T-cell (primary cell): ENCODE measurements at regions of chr1 and their contacts with region 1.

Region 1: GRCh38 chr1:39554277-39554676 is 22.3 kb downstream of the PABPC4 start:
- DNase-seq: no peak
- ATAC-seq: no peak
- H3K4me3 ChIP-seq: no peak overlapping the region
- H3K4me3 Mint-ChIP-seq: no peak overlapping the region
- H3K27ac ChIP-seq: no peak overlapping the region
- H3K27ac Mint-ChIP-seq: no peak overlapping the region
- H3K4me1 ChIP-seq: peaks cover 0 to 4% of the 10 kb centered on the region in 2 experiments
- H3K4me1 Mint-ChIP-seq: peaks cover 1 to 11% (median 8%) of the 10 kb centered on the region in 3 donors
- H3K27me3 ChIP-seq: no peaks in the 10 kb centered on the region
- H3K27me3 Mint-ChIP-seq: no peaks in the 10 kb centered on the region

Region 2: GRCh38 chr1:39394598-39394997 is 159.7 kb before region 1 on chr1:
- CTCF ChIA-PET with region 1: no interaction called
- POLR2A ChIA-PET with region 1: no interaction called
- DNase-seq: peak in 5 of 35 experiments; percentile 3 to 53 (median 15)
- ATAC-seq: peak; percentile 84 to 95 (median 90)
- H3K4me3 ChIP-seq: no peak overlapping the region
- H3K4me3 Mint-ChIP-seq: no peak overlapping the region
- H3K27ac ChIP-seq: no peak overlapping the region
- H3K27ac Mint-ChIP-seq: peak overlapping the region; percentile 29 to 63
- H3K4me1 ChIP-seq: peaks cover 9 to 26% of the 10 kb centered on the region in 2 experiments
- H3K4me1 Mint-ChIP-seq: peaks cover 77 to 88% (median 80%) of the 10 kb centered on the region in 3 donors
- H3K27me3 ChIP-seq: no peaks in the 10 kb centered on the region
- H3K27me3 Mint-ChIP-seq: no peaks in the 10 kb centered on the region

Region 3: DNA sequence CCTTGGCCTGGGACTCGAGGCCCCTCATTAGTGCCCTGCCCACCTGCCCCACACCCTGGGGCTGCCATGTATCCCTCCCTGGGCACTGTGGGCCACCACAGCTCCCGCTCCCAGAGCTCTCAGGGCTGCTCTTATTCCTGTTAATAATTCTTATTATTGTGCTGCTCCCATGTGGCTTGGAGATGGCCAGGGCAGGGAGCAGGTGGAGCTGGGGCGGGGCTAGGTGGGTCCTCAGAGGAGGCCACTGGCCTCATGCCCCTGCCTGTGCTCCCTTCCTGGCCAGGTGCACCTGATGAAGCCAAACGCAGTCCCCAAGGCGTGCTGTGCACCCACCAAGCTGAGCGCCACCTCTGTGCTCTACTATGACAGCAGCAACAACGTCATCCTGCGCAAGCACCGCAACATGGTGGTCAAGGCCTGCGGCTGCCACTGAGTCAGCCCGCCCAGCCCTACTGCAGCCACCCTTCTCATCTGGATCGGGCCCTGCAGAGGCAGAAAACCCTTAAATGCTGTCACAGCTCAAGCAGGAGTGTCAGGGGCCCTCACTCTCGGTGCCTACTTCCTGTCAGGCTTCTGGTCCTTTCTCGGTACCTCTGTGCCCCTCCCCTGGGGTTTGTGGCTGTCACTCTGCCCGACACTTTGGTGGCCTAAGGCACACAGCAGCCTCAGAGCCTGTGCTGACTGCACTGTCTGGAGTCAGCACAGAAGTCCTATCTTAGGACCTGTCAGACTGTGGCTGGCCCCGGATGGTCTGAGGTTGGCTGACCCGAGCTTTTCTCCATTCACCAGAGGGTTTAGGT is 28.7 kb before region 1 on chr1:
- CTCF ChIA-PET with region 1: no interaction called
- POLR2A ChIA-PET with region 1: no interaction called
- DNase-seq: peak in 27 of 35 experiments; percentile 12 to 73 (median 44)
- ATAC-seq: peak; percentile 55 to 90 (median 68)
- H3K4me3 ChIP-seq: no peak overlapping the region
- H3K4me3 Mint-ChIP-seq: no peak overlapping the region
- H3K27ac ChIP-seq: no peak overlapping the region
- H3K27ac Mint-ChIP-seq: no peak overlapping the region
- H3K4me1 ChIP-seq: peaks cover 0 to 21% of the 10 kb centered on the region in 2 experiments
- H3K4me1 Mint-ChIP-seq: peaks cover 2 to 14% (median 6%) of the 10 kb centered on the region in 3 donors
- H3K27me3 ChIP-seq: no peaks in the 10 kb centered on the region
- H3K27me3 Mint-ChIP-seq: no peaks in the 10 kb centered on the region

Region 4: GRCh38 chr1:39564340-39564739 is 10.1 kb after region 1 on chr1:
- CTCF ChIA-PET with region 1: no interaction called
- POLR2A ChIA-PET with region 1: no interaction called
- DNase-seq: no peak
- ATAC-seq: no peak
- H3K4me3 ChIP-seq: no peak overlapping the region
- H3K4me3 Mint-ChIP-seq: no peak overlapping the region
- H3K27ac ChIP-seq: no peak overlapping the region
- H3K27ac Mint-ChIP-seq: no peak overlapping the region
- H3K4me1 ChIP-seq: peaks cover 0 to 9% of the 10 kb centered on the region in 2 experiments
- H3K4me1 Mint-ChIP-seq: peaks cover 10 to 13% (median 10%) of the 10 kb centered on the region in 3 donors
- H3K27me3 ChIP-seq: no peaks in the 10 kb centered on the region
- H3K27me3 Mint-ChIP-seq: no peaks in the 10 kb centered on the region

Region 5: DNA sequence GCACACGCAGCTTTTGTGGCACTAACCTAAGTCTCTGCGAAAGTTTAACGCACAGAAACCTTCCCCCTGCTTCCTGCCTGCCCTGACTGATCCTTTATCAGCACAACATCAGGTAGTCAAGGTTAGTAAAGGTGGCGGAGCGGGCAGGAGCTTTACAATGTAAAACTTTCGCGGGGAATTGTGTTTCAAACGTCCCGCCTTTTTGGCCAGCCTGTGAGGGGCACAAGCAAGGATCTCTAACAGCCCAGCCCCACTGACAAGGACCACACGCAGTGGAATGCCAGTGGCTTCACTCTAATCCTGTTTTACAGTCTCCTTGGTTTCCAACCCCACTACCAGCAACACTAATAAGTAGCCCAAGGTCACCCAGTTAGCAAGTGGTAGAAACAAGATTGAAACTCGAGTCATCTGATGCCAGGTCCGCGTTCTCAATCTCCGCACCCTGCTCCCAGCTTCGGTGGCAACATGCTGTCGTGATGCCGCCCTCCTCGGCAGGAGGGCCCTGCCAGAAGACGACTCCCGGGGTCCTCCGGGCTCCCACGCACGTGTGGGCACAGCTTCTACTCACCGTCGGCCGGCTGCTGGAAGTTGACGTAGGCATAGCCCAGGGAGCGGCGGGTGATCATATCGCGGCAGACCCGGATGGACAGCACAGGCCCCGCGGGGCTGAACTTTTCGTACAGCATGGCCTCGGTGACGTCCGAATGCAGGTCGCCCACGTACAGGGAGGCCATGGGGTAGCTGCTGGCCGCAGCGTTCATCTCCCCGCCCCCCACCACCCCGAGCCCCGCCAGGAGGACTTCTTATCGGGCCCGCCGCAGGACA is 21.1 kb after region 1 on chr1:
- CTCF ChIA-PET with region 1: interaction called in 1 of 2 experiments, 3 read pairs
- POLR2A ChIA-PET with region 1: interaction called in 1 of 2 experiments, 12 read pairs
- DNase-seq: peak; percentile 11 to 65 (median 50)
- ATAC-seq: peak; percentile 52 to 67 (median 55)
- H3K4me3 ChIP-seq: peak overlapping the region; percentile 75 to 94
- H3K4me3 Mint-ChIP-seq: peak overlapping the region; percentile 83 to 89 (median 88)
- H3K27ac ChIP-seq: peak overlapping the region; percentile 56
- H3K27ac Mint-ChIP-seq: peak overlapping the region; percentile 90 to 91
- H3K4me1 ChIP-seq: peaks cover 11 to 34% of the 10 kb centered on the region in 2 experiments
- H3K4me1 Mint-ChIP-seq: peaks cover 27 to 46% (median 45%) of the 10 kb centered on the region in 3 donors
- H3K27me3 ChIP-seq: peaks cover 0 to 3% of the 10 kb centered on the region in 2 experiments
- H3K27me3 Mint-ChIP-seq: no peaks in the 10 kb centered on the region